Gastrocnemius medialis (tissue), 4 donors: ENCODE measurements at regions of chr1 and their contacts with region 1.

Region 1: DNA sequence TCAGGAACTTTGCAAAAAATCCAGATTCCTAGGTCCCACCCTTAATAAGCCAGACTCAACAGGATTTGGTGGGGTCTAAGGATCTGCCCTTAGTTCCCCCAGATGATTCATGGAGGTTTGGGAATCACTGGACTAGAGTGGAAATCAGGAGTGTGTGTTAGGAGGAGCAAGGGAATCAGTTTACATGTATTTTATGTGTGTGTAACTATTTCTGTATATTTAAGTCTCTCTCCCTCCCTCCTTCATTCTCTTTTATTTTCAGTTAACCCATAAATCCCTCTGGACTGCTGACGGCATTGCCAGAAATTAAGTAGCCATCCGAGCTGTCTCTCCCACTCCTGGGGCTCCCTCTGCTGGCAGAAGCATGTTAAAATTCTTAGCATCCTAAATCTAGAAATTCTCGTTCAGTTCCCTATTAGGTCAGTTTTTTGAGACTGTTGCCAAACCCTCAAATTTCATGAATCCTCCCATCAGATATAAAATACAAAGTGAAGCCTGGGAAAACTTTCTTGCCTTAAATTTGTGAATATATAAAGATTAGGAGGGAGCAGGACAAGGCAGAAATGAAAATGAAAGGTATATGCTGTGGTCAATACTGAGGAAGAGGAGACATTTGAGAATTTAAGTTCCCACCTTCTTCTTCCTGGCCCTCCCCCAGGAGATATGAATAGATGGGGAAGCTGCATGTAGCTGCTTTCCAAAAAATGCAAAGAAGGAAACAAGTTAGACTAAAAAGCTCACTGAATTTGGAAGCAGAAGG is 11.7 kb upstream of the HSD11B1 start:
- DNase-seq: peak; percentile 29 to 59
- ATAC-seq: peak; percentile 56 to 85
- H3K4me3 ChIP-seq: no peak overlapping the region
- H3K27ac ChIP-seq: no peak overlapping the region
- H3K4me1 ChIP-seq: peaks cover 0 to 11% of the 10 kb centered on the region in 2 donors
- H3K27me3 ChIP-seq: no peaks in the 10 kb centered on the region
- CTCF ChIP-seq: peak; percentile 84 to 87 (median 87)
- POLR2A ChIP-seq: no peak

Region 2: GRCh38 chr1:209318181-209319056 is 374.5 kb before region 1 on chr1:
- in situ Hi-C with region 1: no loop called
- intact Hi-C with region 1: no loop called
- DNase-seq: no peak
- ATAC-seq: no peak
- H3K4me3 ChIP-seq: no peak overlapping the region
- H3K27ac ChIP-seq: no peak overlapping the region
- H3K4me1 ChIP-seq: no peaks in the 10 kb centered on the region
- H3K27me3 ChIP-seq: no peaks in the 10 kb centered on the region
- CTCF ChIP-seq: no peak
- POLR2A ChIP-seq: no peak

Region 3: GRCh38 chr1:209576798-209577197 is 116.1 kb before region 1 on chr1:
- in situ Hi-C with region 1: loop called (anchors 5 kb)
- intact Hi-C with region 1: loop called (anchors 1 kb)
- DNase-seq: peak; percentile 32 to 73
- ATAC-seq: peak; percentile 93 to 98
- H3K4me3 ChIP-seq: no peak overlapping the region
- H3K27ac ChIP-seq: no peak overlapping the region
- H3K4me1 ChIP-seq: no peaks in the 10 kb centered on the region
- H3K27me3 ChIP-seq: peaks cover 0 to 2% (median 2%) of the 10 kb centered on the region in 3 donors
- CTCF ChIP-seq: peak; percentile 80 to 94 (median 89)
- POLR2A ChIP-seq: no peak

Region 4: GRCh38 chr1:209601809-209602657 is 90.9 kb before region 1 on chr1:
- in situ Hi-C with region 1: no loop called
- intact Hi-C with region 1: loop called (anchors 1 kb)
- DNase-seq: peak; percentile 37 to 52
- ATAC-seq: peak; percentile 98 to 99
- H3K4me3 ChIP-seq: no peak overlapping the region
- H3K27ac ChIP-seq: no peak overlapping the region
- H3K4me1 ChIP-seq: no peaks in the 10 kb centered on the region
- H3K27me3 ChIP-seq: no peaks in the 10 kb centered on the region
- CTCF ChIP-seq: peak; percentile 76 to 90 (median 83)
- POLR2A ChIP-seq: no peak

Region 5: GRCh38 chr1:209627732-209628196 is 65.2 kb before region 1 on chr1:
- in situ Hi-C with region 1: loop called in 2 of 4 experiments (anchors 10 kb)
- intact Hi-C with region 1: loop called (anchors 1 kb)
- DNase-seq: peak; percentile 55 to 84
- ATAC-seq: peak; percentile 51 to 57
- H3K4me3 ChIP-seq: peak overlapping the region; percentile 22 to 44 (median 42)
- H3K27ac ChIP-seq: peak overlapping the region; percentile 83 to 94 (median 93)
- H3K4me1 ChIP-seq: peaks cover 58 to 59% of the 10 kb centered on the region in 2 donors
- H3K27me3 ChIP-seq: no peaks in the 10 kb centered on the region
- CTCF ChIP-seq: peak; percentile 93 to 99 (median 98)
- POLR2A ChIP-seq: no peak

Region 6: GRCh38 chr1:209633335-209633997 is 59.5 kb before region 1 on chr1:
- in situ Hi-C with region 1: loop called in 2 of 4 experiments (anchors 10 kb)
- intact Hi-C with region 1: no loop called
- DNase-seq: no peak
- ATAC-seq: no peak
- H3K4me3 ChIP-seq: no peak overlapping the region
- H3K27ac ChIP-seq: no peak overlapping the region
- H3K4me1 ChIP-seq: peaks cover 25 to 38% of the 10 kb centered on the region in 2 donors
- H3K27me3 ChIP-seq: no peaks in the 10 kb centered on the region
- CTCF ChIP-seq: no peak
- POLR2A ChIP-seq: no peak

Region 7: GRCh38 chr1:209648931-209649776 is 43.8 kb before region 1 on chr1:
- in situ Hi-C with region 1: no loop called
- intact Hi-C with region 1: loop called (anchors 5 kb)
- DNase-seq: no peak
- ATAC-seq: peak; percentile 71 to 73
- H3K4me3 ChIP-seq: no peak overlapping the region
- H3K27ac ChIP-seq: peak overlapping the region; percentile 64 to 75 (median 68)
- H3K4me1 ChIP-seq: peaks cover 62 to 65% of the 10 kb centered on the region in 2 donors
- H3K27me3 ChIP-seq: no peaks in the 10 kb centered on the region
- CTCF ChIP-seq: no peak
- POLR2A ChIP-seq: no peak

Region 8: DNA sequence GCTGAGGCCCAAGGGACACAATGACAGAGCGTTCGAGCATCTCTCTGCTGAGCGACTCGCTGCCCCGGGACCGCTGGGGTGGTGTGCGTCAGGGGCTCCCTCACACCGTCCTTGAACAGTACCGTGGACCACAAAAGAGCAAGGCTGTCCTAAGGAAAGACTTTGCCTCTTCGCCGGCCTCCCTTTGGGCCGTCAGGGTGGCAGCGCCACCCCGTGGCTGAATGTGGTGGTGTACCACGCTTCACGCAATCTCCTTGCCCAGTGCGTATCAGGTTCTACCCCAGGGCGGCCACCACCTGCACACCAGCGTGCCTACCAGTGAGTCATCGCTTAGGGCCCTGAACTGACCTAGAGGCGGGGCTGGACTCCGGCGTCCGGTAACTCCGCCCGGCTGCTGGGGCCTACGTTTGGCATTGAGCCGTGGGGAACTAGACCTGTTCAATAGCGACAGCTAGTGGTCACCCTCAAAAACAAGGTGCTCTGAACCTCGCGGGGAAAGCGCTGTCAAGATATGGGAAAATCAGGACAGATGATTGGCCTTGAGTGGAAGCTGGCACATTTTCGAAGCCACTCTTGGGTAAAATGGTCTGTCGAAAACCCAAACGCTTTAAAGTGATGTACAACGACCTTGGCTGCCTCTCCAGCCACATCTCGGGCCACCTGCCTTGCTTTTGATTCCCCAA is 54.8 kb after region 1 on chr1:
- in situ Hi-C with region 1: no loop called
- intact Hi-C with region 1: loop called (anchors 1 kb)
- DNase-seq: peak; percentile 81 to 96
- ATAC-seq: peak; percentile 91 to 98
- H3K4me3 ChIP-seq: peak overlapping the region in 3 of 4 donors; percentile 20 to 39 (median 32)
- H3K27ac ChIP-seq: peak overlapping the region; percentile 31 to 65 (median 48)
- H3K4me1 ChIP-seq: no peaks in the 10 kb centered on the region
- H3K27me3 ChIP-seq: no peaks in the 10 kb centered on the region
- CTCF ChIP-seq: peak; percentile 81 to 95 (median 81)
- POLR2A ChIP-seq: no peak